ENCODE measurements at regions of chr10 and their contacts with region 1.

Region 1: GRCh38 chr10:119080521-119081260 is at the start of gene EIF3A:
- DNase-seq: peak; percentile 94
- H3K4me3 ChIP-seq: peak within 1 kb of the TSS; percentile 93
- H3K27ac ChIP-seq: peak within 1 kb of the TSS; percentile 97
- H3K4me1 ChIP-seq: no peaks in the 10 kb centered on the region
- H3K27me3 ChIP-seq: no peaks in the 10 kb centered on the region
- CTCF ChIP-seq: no peak
- total RNA-seq, gene EIF3A: 124 to 127 TPM

Region 2: GRCh38 chr10:119030421-119031250 is 50.1 kb before region 1 on chr10:
- intact Hi-C with region 1: loop called (anchors 2 kb)
- DNase-seq: peak; percentile 57
- H3K4me3 ChIP-seq: peak overlapping the region; percentile 26
- H3K27ac ChIP-seq: no peak overlapping the region
- H3K4me1 ChIP-seq: peaks cover 10% of the 10 kb centered on the region
- H3K27me3 ChIP-seq: no peaks in the 10 kb centered on the region
- CTCF ChIP-seq: no peak

Region 3: DNA sequence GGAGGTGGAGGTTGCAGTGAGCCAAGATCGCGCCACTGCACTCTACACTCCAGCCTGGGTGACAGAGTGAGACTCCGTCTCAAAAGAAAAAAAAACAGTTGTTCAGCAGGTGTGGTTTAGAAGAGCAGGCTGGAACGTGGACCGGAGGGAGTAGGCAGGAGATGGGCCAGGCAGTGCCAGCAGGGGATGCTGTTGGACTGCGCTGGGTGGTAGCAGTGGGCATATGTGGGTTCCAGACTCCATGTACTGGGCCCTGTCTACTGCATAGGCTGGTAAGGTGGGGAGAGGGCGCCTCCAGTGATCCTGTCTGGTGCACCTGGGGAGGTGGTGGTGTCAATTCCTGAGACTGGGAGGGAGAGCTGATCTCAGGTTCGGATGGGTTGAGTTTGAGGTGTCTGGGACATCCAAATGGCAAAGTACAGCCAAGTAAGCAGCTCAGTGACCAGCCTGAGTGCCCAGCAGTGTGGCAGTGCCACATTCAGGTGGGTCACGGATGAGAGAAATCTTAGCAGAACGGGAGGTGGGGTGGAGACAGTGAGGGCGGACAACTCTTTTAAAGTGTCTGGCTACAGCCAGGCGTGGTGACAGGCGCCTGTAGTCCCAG is 58.9 kb after region 1 on chr10:
- intact Hi-C with region 1: no loop called
- DNase-seq: peak; percentile 25
- H3K4me3 ChIP-seq: no peak overlapping the region
- H3K27ac ChIP-seq: no peak overlapping the region
- H3K4me1 ChIP-seq: no peaks in the 10 kb centered on the region
- H3K27me3 ChIP-seq: no peaks in the 10 kb centered on the region
- CTCF ChIP-seq: no peak

Measured in colonic mucosa (tissue), 4 donors.